ENCODE measurements at regions of chr18 and their contacts with region 1.

Region 1: GRCh38 chr18:46433121-46433826 is 223.7 kb downstream of the LOXHD1 start:
- DNase-seq: no peak
- ATAC-seq: no peak

Region 2: GRCh38 chr18:46518438-46518837 is 85.2 kb after region 1 on chr18:
- intact Hi-C with region 1: loop called (anchors 10 kb)
- DNase-seq: no peak
- ATAC-seq: no peak

Measured in sciatic nerve (tissue), 2 donors.